SK-N-SH (cell line): ENCODE measurements at regions of chr2 and their contacts with region 1.

Region 1: GRCh38 chr2:174878537-174879147 is 114.4 kb upstream of the CHRNA1 start:
- DNase-seq: peak; percentile 45
- H3K4me3 ChIP-seq: peak overlapping the region; percentile 43 to 44; a peak in 3 of 4 replicates
- H3K27ac ChIP-seq: peak overlapping the region; percentile 42 to 92
- H3K4me1 ChIP-seq: peaks cover 7 to 31% of the 10 kb centered on the region in 2 experiments; a peak in 3 of 4 replicates
- H3K27me3 ChIP-seq: no peaks in the 10 kb centered on the region
- CTCF ChIP-seq: no peak
- EP300 ChIP-seq: peak; percentile 32 to 65; a peak in 2 of 4 replicates
- RAD21 ChIP-seq: no peak

Region 2: DNA sequence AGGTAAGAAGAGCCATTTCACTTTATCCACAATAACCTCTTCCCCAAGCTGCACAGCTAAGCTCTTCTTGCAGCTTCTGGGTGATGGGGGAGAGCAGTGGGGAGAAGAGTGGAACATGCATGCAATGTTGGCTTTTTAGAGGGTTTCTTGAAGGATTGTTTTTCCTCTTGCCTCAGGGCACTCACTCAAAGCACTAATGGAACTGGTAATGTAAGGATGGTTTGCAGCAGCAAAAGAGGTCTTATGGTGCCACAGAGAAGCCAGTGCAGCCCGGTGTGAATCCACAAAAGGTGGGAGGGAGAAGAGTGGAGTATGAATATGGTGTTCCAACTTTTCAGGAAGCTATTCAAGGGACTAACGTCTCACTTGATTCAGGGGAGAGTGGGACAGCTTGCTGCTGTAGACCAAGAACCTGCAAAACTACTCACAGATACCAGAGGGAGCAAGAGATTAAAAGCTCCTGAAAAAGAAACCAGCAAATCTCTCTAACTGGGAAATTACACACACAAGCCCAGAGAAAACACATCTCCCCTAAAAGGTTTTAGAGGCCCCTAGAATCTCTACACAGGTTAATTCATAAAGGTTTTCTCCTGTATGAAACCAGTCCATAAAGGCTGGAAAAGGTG is 10.1 kb after region 1 on chr2:
- CTCF ChIA-PET with region 1: interaction called, 11 read pairs
- POLR2A ChIA-PET with region 1: no interaction called
- DNase-seq: no peak
- H3K4me3 ChIP-seq: no peak overlapping the region
- H3K27ac ChIP-seq: peak overlapping the region in 1 of 2 experiments; percentile 41; a peak in 2 of 4 replicates
- H3K4me1 ChIP-seq: peaks cover 0 to 5% of the 10 kb centered on the region in 2 experiments; a peak in 2 of 4 replicates
- H3K27me3 ChIP-seq: no peaks in the 10 kb centered on the region
- CTCF ChIP-seq: no peak
- EP300 ChIP-seq: no peak
- RAD21 ChIP-seq: no peak